Mammary epithelial cell (primary cell): ENCODE measurements at regions of chr1 and their contacts with region 1.

Region 1: DNA sequence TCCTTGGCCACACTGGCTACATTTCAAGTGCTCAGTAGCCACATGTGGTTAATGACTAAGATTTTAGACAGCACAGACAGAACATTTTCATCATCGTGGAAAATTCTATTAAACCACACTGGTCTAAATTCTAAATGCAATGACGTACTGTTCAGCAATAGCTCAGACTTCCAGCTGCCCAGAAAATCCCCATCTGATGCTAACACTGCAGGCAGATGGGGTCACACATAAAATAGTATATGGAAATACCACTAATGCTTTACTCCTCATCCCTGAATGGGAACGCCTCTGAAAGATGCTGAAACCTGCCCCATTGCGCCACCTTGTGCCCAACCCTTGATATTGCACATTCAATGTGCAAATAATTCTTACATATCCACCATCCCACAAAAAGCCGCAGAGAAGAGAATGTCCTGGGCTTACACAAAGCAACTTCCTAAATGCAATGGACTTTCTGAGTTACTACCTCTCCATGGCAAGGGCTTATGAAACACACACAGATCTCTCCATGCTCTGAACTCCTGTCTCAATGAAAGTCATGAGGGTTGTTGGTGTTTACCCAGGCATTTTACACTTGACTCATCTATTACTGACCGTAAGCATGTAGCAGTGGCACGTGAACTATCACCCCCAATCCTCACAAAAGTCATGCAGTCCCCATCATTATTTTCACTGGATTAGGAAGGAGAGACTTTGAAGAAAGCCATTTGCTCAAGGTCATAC is 20.3 kb upstream of the SLC5A9 start:
- DNase-seq: peak; percentile 97
- H3K4me3 ChIP-seq: no peak overlapping the region
- H3K27ac ChIP-seq: no peak overlapping the region
- H3K4me1 ChIP-seq: peaks cover 15% of the 10 kb centered on the region
- H3K27me3 ChIP-seq: peaks cover 2% of the 10 kb centered on the region
- CTCF ChIP-seq: peak; percentile 82 to 91

Region 2: DNA sequence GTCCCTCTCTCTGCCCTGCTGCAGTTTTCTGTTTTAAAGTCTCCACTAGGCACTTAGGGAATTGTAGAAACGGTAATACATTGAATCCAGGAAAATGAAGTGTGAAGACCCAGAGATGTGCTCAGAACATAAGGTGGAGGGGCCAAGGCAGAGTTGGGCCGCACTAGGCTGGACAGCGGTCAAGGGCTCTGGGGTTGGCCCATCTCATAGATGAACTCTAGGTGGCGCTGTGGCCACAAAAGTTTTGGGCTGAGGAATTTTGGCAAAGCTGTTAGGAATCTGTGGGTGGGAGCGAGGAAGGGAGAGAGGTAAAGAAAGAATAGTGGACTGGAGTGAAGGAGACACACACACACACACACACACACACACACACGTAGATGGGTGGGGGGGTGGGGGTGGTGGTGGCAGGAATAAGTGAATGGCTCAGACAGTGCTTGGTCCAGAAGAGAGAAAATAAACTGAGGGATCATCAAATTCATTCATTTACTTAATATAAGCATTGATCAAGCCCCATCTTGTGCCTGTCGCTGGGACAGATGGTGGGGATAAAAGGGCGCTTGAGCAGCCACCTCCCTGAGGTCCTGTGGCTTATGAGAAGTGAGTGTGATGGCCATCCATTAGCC is 463.5 kb before region 1 on chr1:
- CTCF ChIA-PET with region 1: no interaction called
- dilution Hi-C with region 1: no loop called
- in situ Hi-C with region 1: loop called in 1 of 2 experiments (anchors 10 kb)
- intact Hi-C with region 1: loop called (anchors 1 kb)
- DNase-seq: peak; percentile 32
- H3K4me3 ChIP-seq: no peak overlapping the region
- H3K27ac ChIP-seq: no peak overlapping the region
- H3K4me1 ChIP-seq: no peaks in the 10 kb centered on the region
- H3K27me3 ChIP-seq: no peaks in the 10 kb centered on the region
- CTCF ChIP-seq: peak; percentile 76 to 89

Region 3: GRCh38 chr1:47948126-47948525 is 254.1 kb before region 1 on chr1:
- CTCF ChIA-PET with region 1: no interaction called
- dilution Hi-C with region 1: no loop called
- in situ Hi-C with region 1: no loop called
- intact Hi-C with region 1: loop called (anchors 2 kb)
- DNase-seq: peak; percentile 27
- H3K4me3 ChIP-seq: no peak overlapping the region
- H3K27ac ChIP-seq: no peak overlapping the region
- H3K4me1 ChIP-seq: peaks cover 12% of the 10 kb centered on the region
- H3K27me3 ChIP-seq: no peaks in the 10 kb centered on the region
- CTCF ChIP-seq: peak; percentile 33 to 40

Region 4: DNA sequence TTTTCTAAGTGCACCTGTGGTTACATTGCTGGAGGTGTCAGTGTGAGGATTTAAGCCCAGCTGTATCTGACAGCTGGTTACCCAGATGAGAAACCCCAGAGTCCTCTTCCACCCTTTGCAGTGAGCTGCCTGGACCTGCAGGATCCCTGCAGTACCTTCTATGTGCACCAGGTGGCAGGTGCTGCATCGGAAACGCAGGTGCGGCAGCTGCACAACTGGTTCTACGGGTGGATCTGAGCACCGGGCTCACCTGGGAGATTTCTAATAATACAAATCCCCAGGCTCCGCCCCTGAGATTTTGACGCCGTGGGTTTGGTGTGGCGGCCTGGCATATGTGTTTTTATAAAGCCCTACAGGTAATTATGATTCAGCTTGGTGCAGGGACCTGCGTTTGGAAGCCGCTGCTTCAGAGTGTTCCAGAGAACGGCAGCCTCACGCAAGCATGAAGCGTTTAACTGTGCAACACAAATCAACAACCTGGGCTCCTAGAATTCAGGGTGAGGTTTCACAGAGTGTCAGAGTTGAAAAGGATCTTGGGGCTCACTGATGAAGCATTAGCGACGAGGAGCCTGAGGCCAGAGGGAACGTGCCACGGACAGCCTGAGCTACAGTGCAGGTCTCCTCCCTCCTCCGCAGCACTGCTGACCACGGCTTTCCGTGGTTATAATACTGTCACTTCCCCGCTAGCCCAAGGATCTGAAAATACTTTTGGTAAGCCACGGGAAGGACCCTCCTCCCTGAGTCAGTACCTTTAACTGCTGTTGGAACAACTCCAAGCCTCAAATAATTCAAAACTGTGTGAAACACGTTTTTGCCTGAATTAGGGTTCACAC is 108.3 kb before region 1 on chr1:
- CTCF ChIA-PET with region 1: no interaction called
- dilution Hi-C with region 1: no loop called
- in situ Hi-C with region 1: no loop called
- intact Hi-C with region 1: loop called (anchors 1 kb)
- DNase-seq: peak; percentile 90
- H3K4me3 ChIP-seq: peak overlapping the region in 1 of 3 experiments; percentile 2
- H3K27ac ChIP-seq: no peak overlapping the region
- H3K4me1 ChIP-seq: peaks cover 5% of the 10 kb centered on the region
- H3K27me3 ChIP-seq: peaks cover 18% of the 10 kb centered on the region
- CTCF ChIP-seq: peak; percentile 98

Region 5: GRCh38 chr1:48177257-48177656 is 24.9 kb before region 1 on chr1:
- CTCF ChIA-PET with region 1: no interaction called
- dilution Hi-C with region 1: no loop called
- in situ Hi-C with region 1: no loop called
- intact Hi-C with region 1: loop called (anchors 1 kb)
- DNase-seq: no peak
- H3K4me3 ChIP-seq: no peak overlapping the region
- H3K27ac ChIP-seq: no peak overlapping the region
- H3K4me1 ChIP-seq: no peaks in the 10 kb centered on the region
- H3K27me3 ChIP-seq: peaks cover 3% of the 10 kb centered on the region
- CTCF ChIP-seq: no peak